Aorta (tissue), 5 donors: ENCODE measurements at regions of chr15 and their contacts with region 1.

Region 1: GRCh38 chr15:54082836-54083492 is 104.7 kb downstream of the UNC13C start:
- DNase-seq: no peak
- ATAC-seq: peak; percentile 44
- H3K4me3 ChIP-seq: no peak overlapping the region
- H3K27ac ChIP-seq: no peak overlapping the region
- H3K4me1 ChIP-seq: no peaks in the 10 kb centered on the region
- H3K27me3 ChIP-seq: no peaks in the 10 kb centered on the region

Region 2: GRCh38 chr15:53872410-53872809 is 210.6 kb before region 1 on chr15:
- intact Hi-C with region 1: no loop called
- DNase-seq: no peak
- ATAC-seq: no peak
- H3K4me3 ChIP-seq: no peak overlapping the region
- H3K27ac ChIP-seq: no peak overlapping the region
- H3K4me1 ChIP-seq: no peaks in the 10 kb centered on the region
- H3K27me3 ChIP-seq: no peaks in the 10 kb centered on the region

Region 3: GRCh38 chr15:55110446-55110845 is 1027.5 kb after region 1 on chr15:
- intact Hi-C with region 1: loop called in 1 of 2 experiments (anchors 10 kb)
- DNase-seq: no peak
- ATAC-seq: no peak
- H3K4me3 ChIP-seq: no peak overlapping the region
- H3K27ac ChIP-seq: no peak overlapping the region
- H3K4me1 ChIP-seq: no peaks in the 10 kb centered on the region
- H3K27me3 ChIP-seq: no peaks in the 10 kb centered on the region

Region 4: GRCh38 chr15:55168329-55168974 is 1085.5 kb after region 1 on chr15:
- intact Hi-C with region 1: loop called in 1 of 2 experiments (anchors 10 kb)
- DNase-seq: peak; percentile 71 to 83
- ATAC-seq: no peak
- H3K4me3 ChIP-seq: no peak overlapping the region
- H3K27ac ChIP-seq: no peak overlapping the region
- H3K4me1 ChIP-seq: no peaks in the 10 kb centered on the region
- H3K27me3 ChIP-seq: no peaks in the 10 kb centered on the region